Prostate gland (tissue), 2 donors: ENCODE measurements at regions of chr4 and their contacts with region 1.

Region 1: GRCh38 chr4:139416073-139416673 is 37.7 kb upstream of the RAB33B start:
- DNase-seq: no peak
- H3K4me3 ChIP-seq: no peak overlapping the region
- H3K27ac ChIP-seq: no peak overlapping the region
- H3K4me1 ChIP-seq: no peaks in the 10 kb centered on the region
- H3K27me3 ChIP-seq: no peaks in the 10 kb centered on the region
- CTCF ChIP-seq: peak in 3 of 4 experiments; percentile 52 to 75 (median 67)
- POLR2A ChIP-seq: no peak

Region 2: GRCh38 chr4:139509727-139510410 is 93.7 kb after region 1 on chr4:
- intact Hi-C with region 1: loop called (anchors 10 kb)
- DNase-seq: no peak
- H3K4me3 ChIP-seq: no peak overlapping the region
- H3K27ac ChIP-seq: no peak overlapping the region
- H3K4me1 ChIP-seq: no peaks in the 10 kb centered on the region
- H3K27me3 ChIP-seq: no peaks in the 10 kb centered on the region
- CTCF ChIP-seq: peak in 3 of 4 experiments; percentile 11 to 24 (median 15)
- POLR2A ChIP-seq: no peak

Region 3: DNA sequence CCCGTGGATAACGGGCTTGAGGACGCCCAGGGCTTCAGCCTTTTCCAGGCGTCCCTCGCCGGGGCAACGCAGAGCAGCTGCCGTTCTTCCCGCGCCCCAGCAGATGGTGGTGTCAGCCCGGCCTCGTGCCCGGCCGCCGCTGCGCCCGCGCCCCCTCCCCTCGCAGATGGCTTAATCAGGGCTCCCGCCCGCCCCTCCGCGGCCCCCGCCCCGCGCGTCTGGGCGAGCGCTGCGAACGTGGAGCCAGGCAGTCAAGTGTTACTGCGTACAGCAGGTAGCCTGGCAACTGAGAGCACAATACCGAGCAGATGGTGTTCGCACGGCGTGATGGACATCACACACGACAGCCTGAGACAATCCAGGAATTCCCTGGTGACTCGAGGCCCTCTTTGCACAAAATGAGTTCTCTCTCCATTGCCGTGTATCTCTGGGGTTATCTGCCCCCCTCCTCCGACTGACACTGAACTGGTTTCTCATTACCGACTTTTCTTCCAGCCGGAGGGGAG is 318.8 kb after region 1 on chr4:
- intact Hi-C with region 1: no loop called
- DNase-seq: peak; percentile 88
- H3K4me3 ChIP-seq: peak overlapping the region; percentile 31 to 39
- H3K27ac ChIP-seq: peak overlapping the region; percentile 75 to 80
- H3K4me1 ChIP-seq: peaks cover 2% of the 10 kb centered on the region
- H3K27me3 ChIP-seq: no peaks in the 10 kb centered on the region
- CTCF ChIP-seq: peak; percentile 75 to 95 (median 84)
- POLR2A ChIP-seq: no peak